ENCODE measurements at regions of chr6 and their contacts with region 1.

Region 1: DNA sequence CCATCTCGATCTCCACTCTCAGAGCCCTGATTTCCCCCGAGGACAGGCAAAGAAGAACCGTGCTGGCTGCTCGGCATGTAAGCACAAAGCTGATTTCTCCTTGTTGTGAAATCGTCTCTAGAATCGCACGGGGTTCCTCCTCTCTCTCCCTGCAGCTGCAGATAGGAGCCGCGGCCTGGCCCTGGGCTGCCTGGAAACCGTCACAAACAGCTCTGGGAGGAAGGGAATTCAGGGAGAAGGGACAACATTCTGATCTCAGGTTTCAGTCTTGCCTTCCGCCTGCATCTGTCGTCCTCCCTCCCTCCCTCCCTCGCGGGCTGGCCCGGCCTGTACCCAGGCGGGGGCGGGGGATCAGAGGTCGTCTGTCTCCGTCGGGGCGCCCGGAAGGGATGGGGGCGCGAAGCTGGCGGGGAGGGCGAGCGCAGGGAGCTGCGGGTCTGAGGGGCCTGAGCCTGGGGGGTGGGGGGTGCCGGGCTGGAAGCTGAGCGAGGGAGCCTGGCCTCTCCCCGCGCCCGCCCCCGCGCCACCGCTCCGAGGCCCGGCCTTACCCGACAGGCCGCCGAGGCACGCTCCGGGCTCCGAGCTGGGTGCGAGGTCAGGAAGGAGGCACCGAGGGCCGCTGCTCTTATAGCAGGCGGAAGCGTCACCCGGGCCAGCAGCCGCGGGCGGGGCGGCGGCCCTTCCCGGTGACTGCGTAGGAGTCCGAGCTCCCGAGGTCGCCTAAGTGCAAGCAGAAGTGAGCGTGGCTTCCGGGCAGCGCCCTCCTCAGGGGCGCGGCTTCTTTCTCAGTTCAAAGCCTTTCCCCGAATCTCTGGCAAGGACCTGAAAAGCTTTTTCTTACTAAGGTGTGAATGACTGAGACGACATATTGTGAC is at the start of gene SERPINB1:
- DNase-seq: peak; percentile 88
- H3K4me3 Mint-ChIP-seq: peak within 1 kb of the TSS; percentile 84
- H3K27ac Mint-ChIP-seq: peak within 1 kb of the TSS; percentile 86
- H3K4me1 Mint-ChIP-seq: peaks cover 66% of the 10 kb centered on the region
- H3K27me3 Mint-ChIP-seq: no peaks in the 10 kb centered on the region
- total RNA-seq, gene SERPINB1: 85.0 to 86.5 TPM

Region 2: GRCh38 chr6:2448820-2449571 is 392.5 kb before region 1 on chr6:
- CTCF ChIA-PET with region 1: no interaction called
- POLR2A ChIA-PET with region 1: no interaction called
- DNase-seq: peak; percentile 31
- H3K4me3 Mint-ChIP-seq: peak overlapping the region; percentile 33
- H3K27ac Mint-ChIP-seq: no peak overlapping the region
- H3K4me1 Mint-ChIP-seq: peaks cover 4% of the 10 kb centered on the region
- H3K27me3 Mint-ChIP-seq: peaks cover 18% of the 10 kb centered on the region

Region 3: GRCh38 chr6:2765166-2765895 is 76.2 kb before region 1 on chr6 and contains the start of gene WRNIP1:
- CTCF ChIA-PET with region 1: interaction called, 6 read pairs
- POLR2A ChIA-PET with region 1: interaction called, 48 read pairs
- DNase-seq: peak; percentile 98
- H3K4me3 Mint-ChIP-seq: peak within 1 kb of the TSS; percentile 90
- H3K27ac Mint-ChIP-seq: peak within 1 kb of the TSS; percentile 96
- H3K4me1 Mint-ChIP-seq: peaks cover 50% of the 10 kb centered on the region
- H3K27me3 Mint-ChIP-seq: no peaks in the 10 kb centered on the region
- total RNA-seq, gene WRNIP1: 39.6 to 42.1 TPM

Region 4: DNA sequence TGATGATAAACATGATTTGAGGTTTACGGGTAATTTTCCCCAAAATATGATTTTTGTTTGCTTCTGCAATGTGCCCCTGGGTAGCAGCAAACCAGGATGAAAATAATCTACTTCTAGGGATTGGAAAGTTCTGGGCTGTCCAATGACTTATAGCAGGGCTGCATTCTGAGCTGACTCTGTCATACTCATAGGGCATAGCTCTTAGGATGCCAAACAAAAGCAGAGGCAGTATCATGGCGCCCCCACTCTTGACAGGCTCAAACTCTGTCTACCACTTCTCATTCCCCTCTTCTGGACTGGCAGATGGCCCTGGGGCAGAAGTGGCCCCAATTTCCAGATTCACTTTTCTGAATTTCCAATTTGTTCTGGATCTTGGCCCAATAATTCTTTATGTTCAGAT is 10.1 kb before region 1 on chr6:
- CTCF ChIA-PET with region 1: no interaction called
- POLR2A ChIA-PET with region 1: interaction called, 13 read pairs
- DNase-seq: no peak
- H3K4me3 Mint-ChIP-seq: no peak overlapping the region
- H3K27ac Mint-ChIP-seq: no peak overlapping the region
- H3K4me1 Mint-ChIP-seq: peaks cover 12% of the 10 kb centered on the region
- H3K27me3 Mint-ChIP-seq: no peaks in the 10 kb centered on the region

Region 5: GRCh38 chr6:2876210-2877056 is 34.9 kb after region 1 on chr6:
- CTCF ChIA-PET with region 1: interaction called, 4 read pairs
- POLR2A ChIA-PET with region 1: interaction called, 15 read pairs
- DNase-seq: no peak
- H3K4me3 Mint-ChIP-seq: peak overlapping the region; percentile 81
- H3K27ac Mint-ChIP-seq: peak overlapping the region; percentile 91
- H3K4me1 Mint-ChIP-seq: peaks cover 77% of the 10 kb centered on the region
- H3K27me3 Mint-ChIP-seq: no peaks in the 10 kb centered on the region

Region 6: GRCh38 chr6:2931970-2932748 is 90.7 kb after region 1 on chr6:
- CTCF ChIA-PET with region 1: interaction called, 170 read pairs
- POLR2A ChIA-PET with region 1: interaction called, 11 read pairs
- DNase-seq: peak; percentile 88
- H3K4me3 Mint-ChIP-seq: no peak overlapping the region
- H3K27ac Mint-ChIP-seq: no peak overlapping the region
- H3K4me1 Mint-ChIP-seq: peaks cover 23% of the 10 kb centered on the region
- H3K27me3 Mint-ChIP-seq: peaks cover 20% of the 10 kb centered on the region

Region 7: DNA sequence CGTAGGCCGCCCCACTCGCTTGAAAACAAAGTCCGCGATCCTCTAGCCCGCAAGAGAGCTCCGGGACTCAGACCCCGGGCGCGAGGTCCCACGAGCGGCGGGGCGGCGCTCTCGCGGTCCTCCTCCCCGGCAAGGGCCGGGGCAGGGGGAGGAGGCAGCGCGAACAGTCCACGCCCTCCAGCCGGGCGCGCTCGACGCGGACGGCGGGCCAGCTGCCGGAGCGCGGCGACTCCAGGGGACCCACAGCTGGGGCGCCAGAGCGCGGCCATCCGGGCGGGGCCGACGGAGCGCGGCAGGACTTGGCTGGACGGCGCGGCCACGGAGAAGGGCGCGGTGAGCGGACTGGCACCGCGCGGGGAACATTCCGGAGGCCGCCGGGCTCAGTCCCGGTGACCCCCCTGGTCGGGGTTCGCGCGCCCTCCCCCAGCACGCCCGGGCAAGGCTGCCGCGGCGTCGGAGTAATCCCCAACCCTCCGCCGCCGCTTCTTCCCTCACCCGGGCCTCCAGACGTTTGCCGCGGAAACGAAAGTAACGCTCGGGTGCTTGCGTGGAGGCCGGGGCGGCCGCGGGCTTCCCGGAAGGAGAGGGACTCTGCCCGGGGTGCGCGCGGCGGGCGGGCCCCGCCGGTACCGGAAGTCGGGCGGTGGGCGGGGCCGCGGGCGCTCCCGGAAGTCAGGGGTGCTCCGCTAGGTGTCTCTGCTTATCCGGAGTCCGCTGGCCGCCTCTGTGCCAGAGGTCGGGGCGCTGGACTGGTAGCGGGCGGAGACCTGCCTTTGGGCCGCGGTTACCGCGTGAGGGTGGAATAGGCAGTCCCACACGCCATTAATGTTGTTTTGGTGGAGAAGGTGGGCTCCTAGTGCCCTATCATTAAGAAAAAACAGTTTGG is 227.1 kb after region 1 on chr6 and contains the start of gene RIPK1:
- CTCF ChIA-PET with region 1: interaction called, 3 read pairs
- POLR2A ChIA-PET with region 1: interaction called, 10 read pairs
- DNase-seq: peak; percentile 95
- H3K4me3 Mint-ChIP-seq: peak within 1 kb of the TSS; percentile 98
- H3K27ac Mint-ChIP-seq: peak within 1 kb of the TSS; percentile 99
- H3K4me1 Mint-ChIP-seq: peaks cover 76% of the 10 kb centered on the region
- H3K27me3 Mint-ChIP-seq: no peaks in the 10 kb centered on the region
- total RNA-seq, gene RIPK1: 33.1 to 33.3 TPM

Measured in activated CD4-positive, alpha-beta memory T cell treated with anti-CD3 and anti-CD28 coated beads, Interleukin-2, amount 10 ng/mL, durations not matched to agents 7 days and 5 days (primary cell).